K562 (cell line): ENCODE measurements at regions of chr10 and their contacts with region 1.

Region 1: GRCh38 chr10:75235375-75236177 is at the start of gene COMTD1:
- DNase-seq: peak; percentile 96 to 98 (median 96)
- ATAC-seq: peak; percentile 69
- H3K4me3 ChIP-seq: peak within 1 kb of the TSS; percentile 57
- H3K27ac ChIP-seq: peak within 1 kb of the TSS; percentile 91
- H3K4me1 ChIP-seq: peaks cover 16 to 42% of the 10 kb centered on the region in 2 experiments
- H3K27me3 ChIP-seq: no peaks in the 10 kb centered on the region
- CTCF ChIP-seq: peak; percentile 100
- EP300 ChIP-seq: peak; percentile 50; the same call in 1 of the 2 replicates
- POLR2A ChIP-seq: peak; percentile 60; the same call in 1 of the 2 replicates
- RAD21 ChIP-seq: peak; percentile 100
- polyA plus RNA-seq, gene COMTD1: 0.41 to 1.4 TPM

Region 2: DNA sequence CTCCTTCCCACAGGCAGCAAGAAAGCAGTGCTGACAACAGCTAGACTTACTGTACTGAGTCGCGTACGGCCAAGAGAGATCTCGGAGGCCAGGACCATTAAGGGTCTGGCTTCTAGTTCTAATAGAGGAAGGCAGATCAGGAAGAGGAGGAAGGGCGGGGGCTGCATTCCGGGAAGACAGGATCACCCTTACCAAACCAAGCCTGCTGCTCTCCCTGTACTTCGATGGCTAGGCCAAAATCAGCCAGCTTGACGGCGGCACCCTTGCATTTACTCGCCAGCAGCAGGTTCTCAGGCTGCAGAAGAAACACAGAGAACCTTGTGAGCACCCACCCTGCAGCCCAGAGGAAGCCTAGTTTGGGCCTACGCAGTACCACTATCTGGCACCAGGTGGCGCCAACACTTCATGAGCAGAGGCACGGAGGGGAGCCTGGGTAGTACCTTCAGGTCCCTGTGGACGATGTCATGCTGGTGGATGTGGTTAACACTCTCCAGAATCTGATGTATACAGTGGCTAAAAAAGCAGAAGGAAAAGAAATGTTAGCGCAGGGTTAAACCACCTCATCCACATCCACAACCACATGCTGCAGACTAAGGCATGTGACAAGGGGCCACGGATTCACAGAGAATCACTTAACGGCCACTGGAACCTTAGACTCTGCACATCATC is 1386.6 kb before region 1 on chr10:
- CTCF ChIA-PET with region 1: interaction called, 10 read pairs
- POLR2A ChIA-PET with region 1: no interaction called
- in situ Hi-C with region 1: no loop called
- intact Hi-C with region 1: no loop called
- DNase-seq: peak; percentile 90 to 95 (median 92)
- ATAC-seq: peak; percentile 98
- H3K4me3 ChIP-seq: no peak overlapping the region
- H3K27ac ChIP-seq: no peak overlapping the region
- H3K4me1 ChIP-seq: peaks cover 0 to 11% of the 10 kb centered on the region in 2 experiments; a peak in 2 of 5 replicates
- H3K27me3 ChIP-seq: no peaks in the 10 kb centered on the region
- CTCF ChIP-seq: peak; percentile 97 to 99 (median 99)
- EP300 ChIP-seq: no peak
- POLR2A ChIP-seq: no peak
- RAD21 ChIP-seq: peak; percentile 99

Region 3: GRCh38 chr10:74262856-74263255 is 972.7 kb before region 1 on chr10:
- CTCF ChIA-PET with region 1: interaction called, 14 read pairs
- POLR2A ChIA-PET with region 1: no interaction called
- in situ Hi-C with region 1: no loop called
- intact Hi-C with region 1: loop called (anchors 5 kb)
- DNase-seq: no peak
- ATAC-seq: no peak
- H3K4me3 ChIP-seq: no peak overlapping the region
- H3K27ac ChIP-seq: no peak overlapping the region
- H3K4me1 ChIP-seq: no peaks in the 10 kb centered on the region
- H3K27me3 ChIP-seq: no peaks in the 10 kb centered on the region
- CTCF ChIP-seq: no peak
- EP300 ChIP-seq: no peak
- POLR2A ChIP-seq: no peak
- RAD21 ChIP-seq: no peak

Region 4: DNA sequence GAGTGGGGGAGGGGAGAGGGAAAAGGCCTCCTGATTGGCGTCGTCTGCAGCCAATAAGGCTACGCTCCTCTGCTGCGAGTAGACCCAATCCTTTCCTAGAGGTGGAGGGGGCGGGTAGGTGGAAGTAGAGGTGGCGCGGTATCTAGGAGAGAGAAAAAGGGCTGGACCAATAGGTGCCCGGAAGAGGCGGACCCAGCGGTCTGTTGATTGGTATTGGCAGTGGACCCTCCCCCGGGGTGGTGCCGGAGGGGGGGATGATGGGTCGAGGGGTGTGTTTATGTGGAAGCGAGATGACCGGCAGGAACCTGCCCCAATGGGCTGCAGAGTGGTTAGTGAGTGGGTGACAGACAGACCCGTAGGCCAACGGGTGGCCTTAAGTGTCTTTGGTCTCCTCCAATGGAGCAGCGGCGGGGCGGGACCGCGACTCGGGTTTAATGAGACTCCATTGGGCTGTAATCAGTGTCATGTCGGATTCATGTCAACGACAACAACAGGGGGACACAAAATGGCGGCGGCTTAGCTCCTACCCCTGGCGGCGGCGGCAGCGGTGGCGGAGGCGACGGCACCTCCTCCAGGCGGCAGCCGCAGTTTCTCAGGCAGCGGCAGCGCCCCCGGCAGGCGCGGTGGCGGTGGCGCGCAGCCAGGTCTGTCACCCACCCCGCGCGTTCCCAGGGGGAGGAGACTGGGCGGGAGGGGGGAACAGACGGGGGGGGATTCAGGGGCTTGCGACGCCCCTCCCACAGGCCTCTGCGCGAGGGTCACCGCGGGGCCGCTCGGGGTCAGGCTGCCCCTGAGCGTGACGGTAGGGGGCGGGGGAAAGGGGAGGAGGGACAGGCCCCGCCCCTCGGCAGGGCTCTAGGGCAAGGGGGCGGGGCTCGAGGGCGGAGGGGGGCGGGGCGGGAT is 409.2 kb before region 1 on chr10 and contains the start of gene KAT6B:
- CTCF ChIA-PET with region 1: no interaction called
- POLR2A ChIA-PET with region 1: no interaction called
- in situ Hi-C with region 1: no loop called
- intact Hi-C with region 1: loop called (anchors 10 kb)
- DNase-seq: peak; percentile 97 to 100 (median 98)
- ATAC-seq: peak; percentile 95
- H3K4me3 ChIP-seq: peak within 1 kb of the TSS; percentile 73
- H3K27ac ChIP-seq: peak within 1 kb of the TSS; percentile 90
- H3K4me1 ChIP-seq: peaks cover 33 to 36% of the 10 kb centered on the region in 2 experiments
- H3K27me3 ChIP-seq: no peaks in the 10 kb centered on the region
- CTCF ChIP-seq: peak; percentile 44 to 94 (median 50); a peak in 5 of 6 replicates
- EP300 ChIP-seq: 0 out of 2 replicates have a peak, but pooled peaks have one; percentile 7
- POLR2A ChIP-seq: peak; percentile 87
- RAD21 ChIP-seq: peak in 1 of 2 experiments; percentile 20; a peak in 1 of 4 replicates
- polyA plus RNA-seq, gene KAT6B: 1.4 to 2.4 TPM

Region 5: GRCh38 chr10:75099952-75100763 is 135.4 kb before region 1 on chr10:
- CTCF ChIA-PET with region 1: interaction called, 11 read pairs
- POLR2A ChIA-PET with region 1: interaction called, 3 read pairs
- in situ Hi-C with region 1: no loop called
- intact Hi-C with region 1: no loop called
- DNase-seq: peak; percentile 85 to 93 (median 92)
- ATAC-seq: peak; percentile 96
- H3K4me3 ChIP-seq: no peak overlapping the region
- H3K27ac ChIP-seq: no peak overlapping the region
- H3K4me1 ChIP-seq: peaks cover 16 to 38% of the 10 kb centered on the region in 2 experiments; a peak in 4 of 5 replicates
- H3K27me3 ChIP-seq: no peaks in the 10 kb centered on the region
- CTCF ChIP-seq: peak; percentile 96 to 99 (median 97)
- EP300 ChIP-seq: no peak
- POLR2A ChIP-seq: no peak
- RAD21 ChIP-seq: peak; percentile 96 to 97

Region 6: GRCh38 chr10:75187961-75188426 is 47.6 kb before region 1 on chr10:
- CTCF ChIA-PET with region 1: interaction called, 45 read pairs
- POLR2A ChIA-PET with region 1: interaction called, 5 read pairs
- in situ Hi-C with region 1: no loop called
- intact Hi-C with region 1: loop called (anchors 1 kb)
- DNase-seq: peak; percentile 46 to 85 (median 63)
- ATAC-seq: peak; percentile 79
- H3K4me3 ChIP-seq: no peak overlapping the region
- H3K27ac ChIP-seq: no peak overlapping the region
- H3K4me1 ChIP-seq: peaks cover 6 to 23% of the 10 kb centered on the region in 2 experiments; a peak in 4 of 5 replicates
- H3K27me3 ChIP-seq: no peaks in the 10 kb centered on the region
- CTCF ChIP-seq: peak; percentile 86 to 97 (median 92)
- EP300 ChIP-seq: no peak; the same call in 1 of the 2 replicates
- POLR2A ChIP-seq: no peak
- RAD21 ChIP-seq: peak; percentile 85 to 90

Region 7: DNA sequence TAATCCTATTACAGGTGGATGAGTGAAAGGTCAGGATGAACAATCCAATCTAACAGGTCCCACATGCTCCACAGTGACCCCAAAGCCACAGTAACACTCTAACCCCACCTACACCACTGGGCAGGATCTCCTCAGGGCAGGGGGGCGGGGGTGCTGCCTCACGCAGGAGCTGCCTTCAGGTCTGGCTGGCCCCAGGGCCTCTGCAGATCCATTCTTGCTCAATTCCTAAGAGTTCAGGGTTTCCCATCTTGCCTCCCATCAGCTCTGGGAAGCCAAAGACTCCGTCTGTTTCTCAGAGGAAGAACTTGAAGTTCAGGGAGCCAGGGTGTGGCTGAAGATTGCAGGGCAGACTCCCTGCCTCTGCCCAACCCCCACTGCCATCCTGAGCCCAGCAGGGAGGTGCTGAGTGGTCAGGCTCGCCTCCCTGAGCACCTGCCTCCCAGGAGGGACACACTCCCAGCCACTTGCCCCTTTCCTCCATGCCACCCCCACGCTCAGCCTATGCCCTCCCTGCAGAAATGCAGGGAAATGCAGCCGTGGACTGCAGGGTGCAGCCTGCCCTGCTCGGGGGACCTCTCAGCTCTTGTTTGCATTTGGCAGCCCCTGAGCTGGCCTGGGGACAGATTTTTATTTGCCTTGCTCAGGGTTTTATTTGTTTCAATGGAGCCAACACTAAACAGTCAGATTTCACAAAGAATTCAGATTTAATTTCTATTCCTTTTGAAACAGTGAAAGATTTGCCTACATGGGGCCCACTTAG is 10.1 kb after region 1 on chr10:
- CTCF ChIA-PET with region 1: no interaction called
- POLR2A ChIA-PET with region 1: interaction called, 14 read pairs
- in situ Hi-C with region 1: no loop called
- intact Hi-C with region 1: no loop called
- DNase-seq: no peak
- ATAC-seq: no peak
- H3K4me3 ChIP-seq: no peak overlapping the region
- H3K27ac ChIP-seq: no peak overlapping the region
- H3K4me1 ChIP-seq: peaks cover 9 to 25% of the 10 kb centered on the region in 2 experiments; a peak in 4 of 5 replicates
- H3K27me3 ChIP-seq: peaks cover 0 to 3% of the 10 kb centered on the region in 2 experiments; a peak in 1 of 5 replicates
- CTCF ChIP-seq: no peak
- EP300 ChIP-seq: no peak
- POLR2A ChIP-seq: no peak
- RAD21 ChIP-seq: no peak

Region 8: GRCh38 chr10:75335983-75336382 is 100.4 kb after region 1 on chr10:
- CTCF ChIA-PET with region 1: no interaction called
- POLR2A ChIA-PET with region 1: no interaction called
- in situ Hi-C with region 1: no loop called
- intact Hi-C with region 1: no loop called
- DNase-seq: no peak
- ATAC-seq: no peak
- H3K4me3 ChIP-seq: no peak overlapping the region
- H3K27ac ChIP-seq: no peak overlapping the region
- H3K4me1 ChIP-seq: no peaks in the 10 kb centered on the region
- H3K27me3 ChIP-seq: peaks cover 5 to 11% of the 10 kb centered on the region in 2 experiments; a peak in 4 of 5 replicates
- CTCF ChIP-seq: no peak
- EP300 ChIP-seq: no peak
- POLR2A ChIP-seq: no peak
- RAD21 ChIP-seq: no peak